HCT116 (cell line): ENCODE measurements at regions of chr6 and their contacts with region 1.

Region 1: GRCh38 chr6:103797738-103798137 is 1062.0 kb downstream of the HACE1 start:
- DNase-seq: no peak
- ATAC-seq: no peak
- H3K4me3 ChIP-seq: no peak overlapping the region
- H3K27ac ChIP-seq: no peak overlapping the region
- H3K4me1 ChIP-seq: no peaks in the 10 kb centered on the region
- H3K27me3 ChIP-seq: no peaks in the 10 kb centered on the region
- CTCF ChIP-seq: peak; percentile 30 to 49 (median 40); a peak in 5 of 6 replicates
- POLR2A ChIP-seq: no peak
- RAD21 ChIP-seq: peak; percentile 56

Region 2: DNA sequence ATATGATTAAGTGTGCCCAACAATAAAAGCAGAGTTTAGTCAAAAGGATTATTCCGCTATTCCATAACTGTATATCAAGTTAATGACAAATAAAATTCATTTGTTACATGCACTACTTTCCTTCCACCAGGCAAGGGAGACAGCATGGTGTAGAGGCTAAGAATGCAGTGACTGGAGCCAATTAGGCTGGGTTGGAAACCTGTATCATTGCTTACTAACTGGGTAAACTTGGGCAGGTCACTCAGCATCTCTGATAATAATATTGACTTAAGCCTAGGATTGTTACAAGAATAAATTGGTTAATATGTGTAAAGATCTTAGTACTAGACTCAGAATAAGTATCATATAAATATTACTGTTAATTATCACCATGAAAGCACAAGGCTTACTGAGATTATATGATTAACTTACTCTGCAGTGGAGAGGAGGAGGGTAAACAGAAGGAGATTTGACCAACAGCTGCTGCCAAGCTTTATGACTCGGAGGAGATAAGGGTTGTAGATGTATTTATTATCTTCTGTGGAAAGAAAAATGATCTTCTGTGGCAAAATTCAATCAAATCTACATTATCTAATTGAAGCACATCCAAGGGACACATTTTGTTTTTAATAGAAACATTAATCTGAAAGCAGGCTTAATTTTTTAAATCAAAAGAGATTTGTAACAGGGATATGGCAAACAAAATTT is 944.3 kb before region 1 on chr6:
- CTCF ChIA-PET with region 1: interaction called, 4 read pairs
- POLR2A ChIA-PET with region 1: no interaction called
- RAD21 ChIA-PET with region 1: interaction called in 1 of 2 experiments, 7 read pairs
- intact Hi-C with region 1: loop called (anchors 5 kb)
- DNase-seq: no peak
- ATAC-seq: no peak
- H3K4me3 ChIP-seq: no peak overlapping the region
- H3K27ac ChIP-seq: no peak overlapping the region
- H3K4me1 ChIP-seq: peaks cover 0 to 4% of the 10 kb centered on the region in 2 experiments; a peak in 2 of 4 replicates
- H3K27me3 ChIP-seq: no peaks in the 10 kb centered on the region
- CTCF ChIP-seq: no peak
- POLR2A ChIP-seq: no peak
- RAD21 ChIP-seq: no peak

Region 3: DNA sequence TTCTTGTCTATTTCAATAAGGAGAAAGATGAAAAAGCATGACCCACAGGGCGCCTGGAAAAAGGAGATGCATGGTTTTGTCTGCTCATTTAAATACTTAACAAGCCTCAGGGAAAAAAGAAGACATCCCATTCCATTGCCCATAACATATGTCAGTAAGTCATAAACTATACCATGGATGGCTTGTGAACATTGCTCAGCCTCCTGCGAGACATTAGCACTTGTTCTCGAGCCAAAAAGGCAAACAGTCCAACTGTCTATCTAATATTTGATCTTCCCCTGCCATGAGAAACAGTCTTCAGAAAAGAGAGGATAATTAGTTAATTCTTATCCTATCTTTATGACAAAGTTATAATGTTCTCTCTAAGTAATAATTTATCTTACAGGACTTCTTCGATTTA is 534.6 kb after region 1 on chr6:
- CTCF ChIA-PET with region 1: no interaction called
- POLR2A ChIA-PET with region 1: no interaction called
- RAD21 ChIA-PET with region 1: no interaction called
- intact Hi-C with region 1: loop called (anchors 10 kb)
- DNase-seq: no peak
- ATAC-seq: no peak
- H3K4me3 ChIP-seq: no peak overlapping the region
- H3K27ac ChIP-seq: no peak overlapping the region
- H3K4me1 ChIP-seq: no peaks in the 10 kb centered on the region
- H3K27me3 ChIP-seq: no peaks in the 10 kb centered on the region
- CTCF ChIP-seq: no peak
- POLR2A ChIP-seq: no peak
- RAD21 ChIP-seq: no peak